ENCODE measurements at regions of chr15 and their contacts with region 1.

Region 1: DNA sequence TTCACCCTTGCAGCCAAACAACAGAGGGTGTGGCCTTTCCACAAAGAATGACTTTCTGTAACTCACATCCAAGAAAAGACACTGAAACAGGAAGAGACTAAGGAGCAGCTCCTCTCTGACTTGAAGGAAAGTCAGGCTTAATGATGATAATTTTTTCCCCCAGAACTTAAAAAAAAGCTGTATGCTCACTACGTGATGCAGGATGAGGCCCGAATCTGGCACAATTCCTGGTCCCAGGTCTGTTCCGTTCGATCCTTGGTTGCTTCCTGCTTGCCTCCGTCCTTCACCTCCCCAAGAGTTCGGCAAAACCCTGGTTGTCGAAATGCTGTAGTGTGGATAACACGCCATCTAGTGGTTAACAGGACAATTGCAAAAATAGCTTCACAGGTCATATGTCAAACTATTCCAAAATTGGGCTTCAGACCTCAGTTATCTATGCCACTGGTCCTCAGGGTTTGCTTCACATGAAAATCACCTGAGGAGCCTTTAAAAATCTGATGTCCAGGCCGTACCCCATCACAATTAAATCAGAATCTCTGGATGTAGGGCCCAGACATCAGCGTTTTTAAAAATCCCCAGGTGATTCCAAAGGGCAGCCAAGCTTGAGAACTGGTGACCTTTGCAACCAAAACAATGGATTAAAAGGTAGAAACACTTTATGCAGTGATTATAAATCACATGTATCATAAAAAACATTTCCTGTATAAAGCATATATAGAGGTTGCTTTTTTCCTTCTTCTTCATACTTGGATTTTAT is 28.1 kb upstream of the SYNM start:
- DNase-seq: peak; percentile 80 to 91
- ATAC-seq: peak; percentile 94 to 95
- H3K4me3 ChIP-seq: peak overlapping the region; percentile 8; the same call in 2 of the 3 replicates
- H3K27ac ChIP-seq: peak overlapping the region; percentile 66 to 79
- H3K4me1 ChIP-seq: peaks cover 11% of the 10 kb centered on the region
- CTCF ChIP-seq: peak; percentile 97
- EP300 ChIP-seq: no peak
- POLR2A ChIP-seq: no peak
- RAD21 ChIP-seq: peak; percentile 98 to 100

Region 2: DNA sequence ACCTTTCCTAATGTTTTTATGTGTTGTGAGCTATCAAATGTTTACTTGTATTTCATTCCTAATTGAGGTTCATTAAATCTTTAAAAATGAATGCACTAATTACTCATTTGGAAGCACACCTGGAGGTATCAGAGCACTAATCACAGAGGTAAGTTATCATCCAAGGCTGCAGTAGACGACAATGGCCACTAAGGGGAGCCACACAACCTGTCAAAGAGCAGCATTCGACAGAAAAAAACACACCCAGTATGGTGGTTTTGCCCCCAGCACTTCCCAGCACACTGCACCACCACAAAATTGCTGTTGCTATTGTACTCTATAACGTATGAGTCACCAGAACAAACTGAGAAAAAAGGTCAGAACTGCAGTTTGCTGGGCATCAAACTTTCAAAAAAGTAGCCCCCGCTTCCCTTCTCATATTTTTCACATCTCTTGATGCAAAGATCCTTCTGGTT is 634.3 kb before region 1 on chr15:
- CTCF ChIA-PET with region 1: interaction called, 102 read pairs
- POLR2A ChIA-PET with region 1: no interaction called
- DNase-seq: peak; percentile 80 to 86
- ATAC-seq: peak; percentile 57 to 86
- H3K4me3 ChIP-seq: no peak overlapping the region
- H3K27ac ChIP-seq: no peak overlapping the region
- H3K4me1 ChIP-seq: peaks cover 8% of the 10 kb centered on the region
- CTCF ChIP-seq: peak; percentile 97
- EP300 ChIP-seq: no peak
- POLR2A ChIP-seq: no peak
- RAD21 ChIP-seq: peak; percentile 97 to 98

Region 3: GRCh38 chr15:98850961-98851573 is 225.7 kb before region 1 on chr15:
- CTCF ChIA-PET with region 1: interaction called, 14 read pairs
- POLR2A ChIA-PET with region 1: interaction called, 3 read pairs
- DNase-seq: peak; percentile 84 to 89
- ATAC-seq: peak; percentile 65 to 76
- H3K4me3 ChIP-seq: peak overlapping the region; percentile 47; the same call in 2 of the 3 replicates
- H3K27ac ChIP-seq: peak overlapping the region; percentile 95 to 97
- H3K4me1 ChIP-seq: peaks cover 86% of the 10 kb centered on the region
- CTCF ChIP-seq: peak; percentile 88
- EP300 ChIP-seq: peak; percentile 25 to 27; a peak in 2 of 5 replicates
- POLR2A ChIP-seq: no peak
- RAD21 ChIP-seq: peak; percentile 98

Region 4: DNA sequence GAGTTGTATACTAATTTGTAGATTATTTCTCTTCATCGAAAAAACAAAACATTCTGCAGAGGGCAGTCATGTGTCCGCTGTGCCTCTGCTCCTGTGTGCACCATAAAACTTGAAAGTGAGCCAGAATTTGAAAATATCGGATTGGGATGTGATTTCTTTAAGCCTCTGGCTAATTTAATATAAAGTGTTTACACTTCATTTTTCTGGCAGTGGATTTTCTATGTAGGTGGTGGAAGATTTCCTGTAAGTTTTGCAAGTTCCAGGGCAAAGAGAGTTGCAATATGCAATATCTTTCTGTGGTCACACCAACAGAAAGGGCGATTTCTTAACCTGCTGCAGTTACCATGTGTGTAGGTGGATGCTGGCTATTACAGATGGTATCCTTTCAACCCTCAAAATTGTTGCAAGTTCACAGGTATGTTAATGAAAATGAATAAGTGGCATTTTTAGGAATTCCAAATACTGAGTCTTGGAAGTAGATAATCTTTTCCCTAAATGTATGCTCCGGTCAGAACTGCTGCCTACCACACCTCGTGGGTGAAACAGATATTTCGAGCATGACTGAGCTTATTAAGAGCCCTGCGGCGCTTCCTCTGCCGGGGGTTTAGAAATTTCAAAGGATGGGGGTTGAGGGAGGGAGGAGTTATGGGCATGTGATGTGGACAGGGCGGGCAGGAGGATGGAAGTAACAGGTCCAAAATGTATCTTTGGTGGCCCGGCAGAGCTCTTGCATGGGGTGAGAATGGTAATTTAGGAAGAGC is 203.1 kb before region 1 on chr15:
- CTCF ChIA-PET with region 1: interaction called, 11 read pairs
- POLR2A ChIA-PET with region 1: interaction called, 6 read pairs
- DNase-seq: peak; percentile 97
- ATAC-seq: peak; percentile 86 to 89
- H3K4me3 ChIP-seq: peak overlapping the region; percentile 26
- H3K27ac ChIP-seq: peak overlapping the region; percentile 95 to 97
- H3K4me1 ChIP-seq: peaks cover 96% of the 10 kb centered on the region
- CTCF ChIP-seq: peak; percentile 43
- EP300 ChIP-seq: peak; percentile 96 to 99
- POLR2A ChIP-seq: no peak; the same call in 1 of the 2 replicates
- RAD21 ChIP-seq: peak; percentile 30 to 36

Region 5: DNA sequence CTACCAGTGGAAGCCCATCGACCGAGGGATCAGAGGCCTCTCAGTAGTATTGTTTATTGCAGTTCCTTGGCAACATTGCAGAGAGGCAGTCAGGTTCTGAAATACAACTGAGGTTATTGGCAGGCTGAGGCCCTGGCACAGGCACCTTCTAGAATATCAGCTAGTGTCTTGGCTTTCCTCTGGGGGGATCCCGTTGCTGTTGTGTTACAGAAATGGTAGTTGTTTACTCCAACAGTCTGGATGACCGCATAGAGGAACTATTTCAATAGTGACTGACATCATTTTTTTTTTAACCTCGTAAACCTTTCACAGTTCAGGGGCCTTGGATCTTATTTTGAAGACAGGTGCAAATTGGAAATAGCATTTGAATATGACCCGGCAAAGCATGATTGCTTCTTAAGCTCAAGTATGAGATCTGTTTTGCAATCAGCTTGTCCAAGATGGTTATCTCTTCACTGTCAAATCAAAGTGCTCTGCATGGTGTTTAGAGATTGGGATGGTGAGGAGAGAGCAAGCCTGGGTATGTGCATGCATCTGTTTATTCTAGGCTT is 133.1 kb before region 1 on chr15:
- CTCF ChIA-PET with region 1: interaction called, 12 read pairs
- POLR2A ChIA-PET with region 1: no interaction called
- DNase-seq: no peak
- ATAC-seq: no peak
- H3K4me3 ChIP-seq: no peak overlapping the region
- H3K27ac ChIP-seq: peak overlapping the region; percentile 55 to 69; a peak in 4 of 6 replicates
- H3K4me1 ChIP-seq: peaks cover 47% of the 10 kb centered on the region
- CTCF ChIP-seq: no peak
- EP300 ChIP-seq: no peak
- POLR2A ChIP-seq: no peak
- RAD21 ChIP-seq: no peak

Region 6: DNA sequence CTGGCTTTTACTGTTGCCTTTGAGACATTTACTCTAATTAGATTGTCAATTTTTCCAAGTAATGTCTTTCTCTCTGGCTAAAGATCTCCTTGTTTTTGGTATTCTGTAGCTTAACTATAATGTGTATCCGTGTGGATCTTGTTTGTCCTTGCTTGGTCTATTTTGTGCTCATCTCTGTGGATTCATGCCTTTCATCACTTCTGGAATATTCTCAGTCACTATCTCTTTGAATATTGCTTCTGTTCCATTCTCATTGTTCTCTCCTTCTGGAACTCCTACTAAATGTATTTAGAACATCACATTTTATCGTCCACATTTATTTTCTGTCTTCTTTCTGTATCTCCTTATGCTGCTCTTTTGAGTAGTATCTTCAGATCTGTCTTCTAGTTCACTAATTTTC is 81.8 kb before region 1 on chr15:
- CTCF ChIA-PET with region 1: no interaction called
- POLR2A ChIA-PET with region 1: no interaction called
- DNase-seq: no peak
- ATAC-seq: no peak
- H3K4me3 ChIP-seq: no peak overlapping the region
- H3K27ac ChIP-seq: no peak overlapping the region
- H3K4me1 ChIP-seq: no peaks in the 10 kb centered on the region
- CTCF ChIP-seq: no peak
- EP300 ChIP-seq: no peak
- POLR2A ChIP-seq: no peak
- RAD21 ChIP-seq: no peak

Region 7: GRCh38 chr15:99006103-99006502 is 70.6 kb before region 1 on chr15:
- CTCF ChIA-PET with region 1: no interaction called
- POLR2A ChIA-PET with region 1: no interaction called
- DNase-seq: no peak
- ATAC-seq: peak; percentile 17 to 27; a peak in 2 of 6 replicates
- H3K4me3 ChIP-seq: no peak overlapping the region
- H3K27ac ChIP-seq: no peak overlapping the region
- H3K4me1 ChIP-seq: peaks cover 10% of the 10 kb centered on the region; the same call in 2 of the 3 replicates
- CTCF ChIP-seq: no peak
- EP300 ChIP-seq: no peak
- POLR2A ChIP-seq: no peak
- RAD21 ChIP-seq: no peak

Region 8: GRCh38 chr15:99104788-99105513 is 28.2 kb after region 1 on chr15 and contains the start of gene SYNM:
- CTCF ChIA-PET with region 1: interaction called, 29 read pairs
- POLR2A ChIA-PET with region 1: no interaction called
- DNase-seq: peak; percentile 93 to 94
- ATAC-seq: peak; percentile 83 to 91
- H3K4me3 ChIP-seq: peak within 1 kb of the TSS; percentile 64
- H3K27ac ChIP-seq: peak within 1 kb of the TSS; percentile 77 to 92
- H3K4me1 ChIP-seq: peaks cover 20% of the 10 kb centered on the region
- CTCF ChIP-seq: peak; percentile 99
- EP300 ChIP-seq: no peak
- POLR2A ChIP-seq: peak; percentile 100
- RAD21 ChIP-seq: peak; percentile 76 to 97
- polyA plus RNA-seq, gene SYNM: 22.6 and 23.7 TPM in 2 replicates

Region 9: DNA sequence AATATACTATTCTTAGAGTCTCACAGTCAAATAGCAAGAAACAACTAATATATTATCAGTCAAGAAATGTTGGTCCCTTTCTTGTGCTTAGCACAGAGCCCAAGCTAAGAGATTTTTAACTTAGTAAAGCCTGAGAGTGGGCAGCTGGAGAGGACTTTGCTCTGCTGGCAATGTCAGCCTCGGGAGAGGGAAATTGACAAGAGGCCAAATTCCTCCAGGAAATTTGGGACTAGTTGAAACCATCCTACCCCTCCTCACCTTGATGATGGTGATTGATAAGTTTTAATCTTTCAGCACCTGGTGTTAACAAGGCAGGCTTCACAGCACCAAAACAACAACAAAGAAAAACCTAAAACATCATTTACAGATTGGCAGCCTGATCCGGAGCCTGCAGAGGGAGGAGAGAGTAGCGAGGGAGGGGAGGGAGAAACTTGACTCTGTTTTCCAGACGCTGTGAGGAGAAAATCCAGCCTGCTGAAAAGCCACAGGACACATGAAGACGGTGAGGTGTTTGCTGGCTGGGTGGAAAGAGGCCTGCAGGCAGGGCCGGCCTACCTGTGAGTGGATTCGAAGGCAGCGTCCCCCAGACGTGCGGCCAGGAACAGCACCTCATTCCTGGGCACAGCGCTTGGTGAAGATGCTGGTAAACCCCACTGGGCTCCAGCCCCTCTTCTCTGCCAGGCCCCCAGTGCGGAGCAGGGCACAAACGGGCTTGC is 325.4 kb after region 1 on chr15:
- CTCF ChIA-PET with region 1: no interaction called
- POLR2A ChIA-PET with region 1: no interaction called
- DNase-seq: no peak
- ATAC-seq: no peak
- H3K4me3 ChIP-seq: no peak overlapping the region
- H3K27ac ChIP-seq: peak overlapping the region in 1 of 2 experiments; percentile 6; a peak in 1 of 6 replicates
- H3K4me1 ChIP-seq: peaks cover 14% of the 10 kb centered on the region
- CTCF ChIP-seq: no peak
- EP300 ChIP-seq: no peak
- POLR2A ChIP-seq: no peak
- RAD21 ChIP-seq: no peak